ENCODE measurements at regions of chr1 and their contacts with region 1.

Region 1: GRCh38 chr1:99461499-99461898 is 184.4 kb upstream of the PALMD start:
- DNase-seq: no peak
- H3K4me3 ChIP-seq: no peak overlapping the region
- H3K27ac ChIP-seq: no peak overlapping the region
- H3K4me1 ChIP-seq: no peaks in the 10 kb centered on the region
- H3K27me3 ChIP-seq: no peaks in the 10 kb centered on the region
- CTCF ChIP-seq: no peak

Region 2: DNA sequence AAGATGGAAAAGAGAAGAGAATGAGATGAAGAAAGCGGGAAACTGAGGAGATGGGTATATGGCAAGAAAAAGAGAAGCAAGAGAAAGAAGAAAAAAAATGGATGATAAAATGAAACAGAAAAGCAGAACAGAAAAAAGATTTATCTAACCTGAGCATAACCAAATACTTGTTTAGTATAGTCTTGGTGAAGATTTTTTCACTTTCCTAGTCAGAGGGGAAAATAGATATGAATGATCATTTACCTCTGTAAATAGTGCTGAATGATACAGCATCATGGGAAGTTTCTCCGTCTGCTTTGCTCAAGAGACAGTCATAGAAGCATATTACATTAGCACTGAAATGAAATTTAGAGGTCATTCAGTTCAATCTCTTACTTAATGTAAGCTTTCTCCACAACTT is 233.3 kb before region 1 on chr1:
- intact Hi-C with region 1: loop called (anchors 5 kb)
- DNase-seq: no peak
- H3K4me3 ChIP-seq: no peak overlapping the region
- H3K27ac ChIP-seq: no peak overlapping the region
- H3K4me1 ChIP-seq: no peaks in the 10 kb centered on the region
- H3K27me3 ChIP-seq: no peaks in the 10 kb centered on the region
- CTCF ChIP-seq: no peak